Posterior vena cava (tissue), 2 donors: ENCODE measurements at regions of chr2 and their contacts with region 1.

Region 1: GRCh38 chr2:127106951-127107621 is at the start of gene BIN1:
- DNase-seq: peak; percentile 95
- total RNA-seq, gene BIN1: 49.2 to 84.8 TPM

Region 2: DNA sequence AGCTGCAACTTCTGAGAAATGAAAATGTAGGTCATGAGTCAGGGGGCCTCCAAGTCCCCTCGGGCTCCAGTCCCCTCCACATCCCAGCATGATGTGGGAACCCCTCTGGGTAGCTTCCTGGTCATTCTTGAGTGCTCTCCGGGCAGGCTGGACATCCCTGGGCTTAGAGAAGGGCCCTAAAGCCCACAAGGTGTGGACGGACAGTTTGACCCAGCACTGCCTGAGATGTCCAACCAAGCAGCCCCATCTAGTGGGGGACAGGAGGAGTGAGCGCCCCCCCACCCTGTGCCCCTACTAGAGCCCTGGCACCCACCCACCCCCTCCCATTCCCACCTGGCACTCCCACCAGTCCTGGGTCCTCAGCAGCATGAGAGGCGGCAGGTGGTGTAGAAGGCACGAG is 67.0 kb after region 1 on chr2:
- intact Hi-C with region 1: loop called in 1 of 2 experiments (anchors 10 kb)
- DNase-seq: no peak